Natural killer cell (primary cell): ENCODE measurements at regions of chr3 and their contacts with region 1.

Region 1: DNA sequence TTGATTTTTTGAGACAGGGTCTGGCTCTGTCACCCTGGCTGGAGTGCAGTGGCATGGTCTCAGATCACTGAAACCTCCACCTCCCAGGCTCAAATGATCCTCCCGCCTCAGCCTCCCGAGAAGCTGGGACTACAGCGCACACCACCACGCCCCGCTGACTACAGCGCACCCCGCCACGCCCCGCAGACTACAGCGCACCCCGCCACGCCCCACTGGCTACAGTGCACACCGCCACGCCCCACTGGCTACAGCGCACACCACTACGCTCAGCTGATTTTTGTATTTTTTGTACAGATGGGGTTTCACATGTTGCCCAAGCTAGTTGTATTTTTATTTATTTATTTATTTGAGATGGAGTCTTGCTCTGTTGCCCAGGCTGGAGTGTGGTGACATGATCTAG is 35.6 kb downstream of the SLC51A start:
- DNase-seq: no peak
- ATAC-seq: no peak
- H3K4me3 ChIP-seq: no peak overlapping the region
- H3K4me3 Mint-ChIP-seq: no peak overlapping the region
- H3K27ac ChIP-seq: no peak overlapping the region
- H3K27ac Mint-ChIP-seq: no peak overlapping the region
- H3K4me1 ChIP-seq: no peaks in the 10 kb centered on the region
- H3K4me1 Mint-ChIP-seq: peaks cover 5 to 14% of the 10 kb centered on the region in 2 donors
- H3K27me3 ChIP-seq: no peaks in the 10 kb centered on the region
- H3K27me3 Mint-ChIP-seq: no peaks in the 10 kb centered on the region
- CTCF ChIP-seq: no peak

Region 2: DNA sequence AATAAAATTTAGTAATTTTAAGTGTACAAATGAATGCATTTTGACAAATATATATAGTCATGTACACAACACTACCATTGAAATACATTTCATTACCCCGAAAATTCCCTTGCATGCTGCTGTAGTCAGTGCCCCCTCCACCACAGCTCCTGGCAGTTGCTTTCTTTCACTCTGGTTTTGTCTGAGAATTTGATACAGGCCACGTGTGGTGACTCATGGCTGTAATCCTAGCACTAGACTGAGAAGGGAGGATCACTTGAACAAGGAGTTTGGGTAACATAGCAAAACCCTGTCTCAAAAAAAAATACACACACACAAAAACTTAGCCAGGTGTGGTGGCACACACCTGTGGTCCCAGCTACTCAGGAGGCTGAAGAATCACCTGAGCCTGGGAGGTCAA is 235.4 kb before region 1 on chr3:
- intact Hi-C with region 1: no loop called
- DNase-seq: no peak
- ATAC-seq: no peak
- H3K4me3 ChIP-seq: no peak overlapping the region
- H3K4me3 Mint-ChIP-seq: no peak overlapping the region
- H3K27ac ChIP-seq: no peak overlapping the region
- H3K27ac Mint-ChIP-seq: no peak overlapping the region
- H3K4me1 ChIP-seq: no peaks in the 10 kb centered on the region
- H3K4me1 Mint-ChIP-seq: no peaks in the 10 kb centered on the region
- H3K27me3 ChIP-seq: no peaks in the 10 kb centered on the region
- H3K27me3 Mint-ChIP-seq: peaks cover 0 to 15% of the 10 kb centered on the region in 2 donors
- CTCF ChIP-seq: no peak

Region 3: GRCh38 chr3:196238612-196239560 is 13.0 kb before region 1 on chr3:
- intact Hi-C with region 1: no loop called
- DNase-seq: no peak
- ATAC-seq: no peak
- H3K4me3 ChIP-seq: no peak overlapping the region
- H3K4me3 Mint-ChIP-seq: no peak overlapping the region
- H3K27ac ChIP-seq: no peak overlapping the region
- H3K27ac Mint-ChIP-seq: no peak overlapping the region
- H3K4me1 ChIP-seq: peaks cover 7% of the 10 kb centered on the region
- H3K4me1 Mint-ChIP-seq: peaks cover 28 to 32% of the 10 kb centered on the region in 2 donors
- H3K27me3 ChIP-seq: no peaks in the 10 kb centered on the region
- H3K27me3 Mint-ChIP-seq: no peaks in the 10 kb centered on the region
- CTCF ChIP-seq: no peak

Region 4: DNA sequence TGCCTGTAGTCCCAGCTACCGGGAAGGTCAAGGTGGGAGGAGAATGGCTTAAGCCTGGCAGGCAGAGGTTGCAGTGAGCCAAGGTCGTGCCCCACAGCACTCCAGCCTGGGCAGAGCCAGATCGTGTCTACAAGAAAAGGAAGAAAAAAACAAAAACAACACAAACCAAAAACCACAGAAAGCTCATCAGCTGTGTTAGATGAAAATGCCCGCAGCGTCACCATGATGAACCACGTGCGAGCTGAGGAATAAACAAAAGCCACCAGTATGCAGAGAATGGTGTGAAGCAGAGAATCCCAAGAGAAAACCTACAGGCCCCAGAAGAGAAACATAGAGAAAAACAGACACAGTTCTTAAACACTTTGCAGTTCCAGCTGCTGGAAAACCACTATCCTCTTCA is 106.0 kb after region 1 on chr3:
- intact Hi-C with region 1: loop called (anchors 5 kb)
- DNase-seq: peak; percentile 55 to 57
- ATAC-seq: peak; percentile 80 to 88 (median 81)
- H3K4me3 ChIP-seq: no peak overlapping the region
- H3K4me3 Mint-ChIP-seq: peak overlapping the region; percentile 73
- H3K27ac ChIP-seq: peak overlapping the region; percentile 13
- H3K27ac Mint-ChIP-seq: peak overlapping the region; percentile 74 to 82
- H3K4me1 ChIP-seq: peaks cover 15% of the 10 kb centered on the region
- H3K4me1 Mint-ChIP-seq: peaks cover 19 to 44% of the 10 kb centered on the region in 2 donors
- H3K27me3 ChIP-seq: no peaks in the 10 kb centered on the region
- H3K27me3 Mint-ChIP-seq: no peaks in the 10 kb centered on the region
- CTCF ChIP-seq: no peak

Region 5: GRCh38 chr3:196432137-196432879 is 180.4 kb after region 1 on chr3 and contains the start of gene UBXN7:
- intact Hi-C with region 1: loop called (anchors 1 kb)
- DNase-seq: peak; percentile 94 to 98
- ATAC-seq: peak; percentile 87 to 96 (median 93)
- H3K4me3 ChIP-seq: peak within 1 kb of the TSS; percentile 86
- H3K4me3 Mint-ChIP-seq: peak within 1 kb of the TSS; percentile 97
- H3K27ac ChIP-seq: peak within 1 kb of the TSS; percentile 81
- H3K27ac Mint-ChIP-seq: peak within 1 kb of the TSS; percentile 94 to 96
- H3K4me1 ChIP-seq: peaks cover 11% of the 10 kb centered on the region
- H3K4me1 Mint-ChIP-seq: peaks cover 21 to 27% of the 10 kb centered on the region in 2 donors
- H3K27me3 ChIP-seq: no peaks in the 10 kb centered on the region
- H3K27me3 Mint-ChIP-seq: no peaks in the 10 kb centered on the region
- CTCF ChIP-seq: no peak
- total RNA-seq, gene UBXN7: 82.0 to 97.2 (median 82.4) TPM

Region 6: DNA sequence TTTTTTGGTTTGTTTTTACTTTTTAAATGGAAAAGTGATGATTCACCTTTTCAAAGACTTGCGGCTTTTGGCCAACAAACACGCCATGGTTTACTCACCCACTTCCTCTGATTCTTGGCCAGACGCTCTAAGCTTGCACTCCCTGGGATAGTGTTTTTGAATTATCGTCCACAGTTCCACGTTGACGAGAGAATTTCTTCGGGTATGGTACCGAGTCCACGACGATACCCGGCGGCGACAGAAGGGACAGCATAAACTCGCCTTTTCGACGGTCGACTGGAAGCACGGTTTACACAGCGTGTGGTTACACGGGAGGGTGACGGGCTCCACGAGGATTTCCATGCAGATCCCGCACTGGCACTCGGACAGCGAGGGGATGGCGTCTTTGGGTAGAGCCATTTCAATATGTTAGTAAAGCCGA is 250.9 kb after region 1 on chr3:
- intact Hi-C with region 1: no loop called
- DNase-seq: peak; percentile 46 to 82
- ATAC-seq: peak; percentile 39 to 63 (median 54)
- H3K4me3 ChIP-seq: peak overlapping the region; percentile 87
- H3K4me3 Mint-ChIP-seq: peak overlapping the region; percentile 99
- H3K27ac ChIP-seq: peak overlapping the region; percentile 86
- H3K27ac Mint-ChIP-seq: peak overlapping the region; percentile 94 to 97
- H3K4me1 ChIP-seq: peaks cover 30% of the 10 kb centered on the region
- H3K4me1 Mint-ChIP-seq: peaks cover 50 to 56% of the 10 kb centered on the region in 2 donors
- H3K27me3 ChIP-seq: no peaks in the 10 kb centered on the region
- H3K27me3 Mint-ChIP-seq: no peaks in the 10 kb centered on the region
- CTCF ChIP-seq: no peak

Region 7: GRCh38 chr3:196518966-196519717 is 267.2 kb after region 1 on chr3:
- intact Hi-C with region 1: loop called (anchors 1 kb)
- DNase-seq: peak; percentile 55 to 78
- ATAC-seq: peak in 2 of 3 donors; percentile 68 to 82
- H3K4me3 ChIP-seq: no peak overlapping the region
- H3K4me3 Mint-ChIP-seq: no peak overlapping the region
- H3K27ac ChIP-seq: no peak overlapping the region
- H3K27ac Mint-ChIP-seq: no peak overlapping the region
- H3K4me1 ChIP-seq: no peaks in the 10 kb centered on the region
- H3K4me1 Mint-ChIP-seq: no peaks in the 10 kb centered on the region
- H3K27me3 ChIP-seq: no peaks in the 10 kb centered on the region
- H3K27me3 Mint-ChIP-seq: no peaks in the 10 kb centered on the region
- CTCF ChIP-seq: peak; percentile 73